Common myeloid progenitor, CD34-positive (primary cell): ENCODE measurements at regions of chr16 and their contacts with region 1.

Region 1: GRCh38 chr16:56970934-56971767 is 9.4 kb downstream of the CETP start:
- DNase-seq: peak in 1 of 3 donors; percentile 36
- H3K4me3 ChIP-seq: no peak overlapping the region
- H3K27ac ChIP-seq: no peak overlapping the region
- H3K4me1 ChIP-seq: peaks cover 5 to 14% (median 7%) of the 10 kb centered on the region in 4 experiments
- H3K27me3 ChIP-seq: no peaks in the 10 kb centered on the region

Region 2: GRCh38 chr16:56988948-56989945 is 18.1 kb after region 1 on chr16 and contains the start of gene NLRC5:
- CTCF ChIA-PET with region 1: interaction called, 19 read pairs
- POLR2A ChIA-PET with region 1: interaction called, 3 read pairs
- DNase-seq: peak; percentile 83 to 94 (median 92)
- H3K4me3 ChIP-seq: peak within 1 kb of the TSS; percentile 58 to 95 (median 83)
- H3K27ac ChIP-seq: peak within 1 kb of the TSS; percentile 66 to 68
- H3K4me1 ChIP-seq: peaks cover 5 to 30% (median 26%) of the 10 kb centered on the region in 4 experiments
- H3K27me3 ChIP-seq: no peaks in the 10 kb centered on the region

Region 3: DNA sequence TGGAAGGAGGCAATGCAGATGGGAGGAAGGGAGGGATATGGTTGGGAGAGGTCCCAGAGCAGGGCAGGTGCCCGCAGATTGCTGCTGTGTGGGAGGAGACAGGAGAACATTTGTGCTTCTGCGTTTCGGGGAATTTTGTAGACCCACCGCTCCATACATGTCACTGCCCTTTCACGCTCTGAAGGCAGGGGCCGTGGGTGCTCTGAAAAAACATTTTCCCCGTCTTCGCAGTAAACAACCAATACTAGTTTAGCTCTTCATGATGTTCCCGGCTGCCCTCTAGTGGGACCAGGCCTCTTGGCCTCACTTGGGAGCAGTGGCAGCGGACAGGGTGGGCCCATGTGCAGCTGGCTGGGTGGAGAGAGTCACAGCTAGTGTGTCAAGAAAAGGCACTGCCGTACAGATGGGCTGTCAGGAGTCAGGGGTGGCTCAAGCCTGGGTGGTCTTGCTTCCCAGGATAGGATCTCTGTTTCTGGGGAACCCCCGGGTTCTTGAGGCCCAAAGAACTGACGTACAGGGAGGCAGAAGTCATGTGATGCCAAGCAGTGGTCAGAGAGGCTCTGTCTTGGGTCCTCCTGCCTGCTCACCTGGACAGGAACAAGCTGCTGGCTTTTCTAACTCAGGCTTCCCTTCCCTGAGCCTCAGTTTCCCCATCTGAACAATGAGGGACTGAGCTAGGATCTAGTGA is 74.7 kb after region 1 on chr16:
- CTCF ChIA-PET with region 1: interaction called, 61 read pairs
- POLR2A ChIA-PET with region 1: no interaction called
- DNase-seq: peak; percentile 59 to 81 (median 76)
- H3K4me3 ChIP-seq: peak overlapping the region in 1 of 7 experiments; percentile 8
- H3K27ac ChIP-seq: no peak overlapping the region
- H3K4me1 ChIP-seq: peaks cover 2 to 33% (median 21%) of the 10 kb centered on the region in 4 experiments
- H3K27me3 ChIP-seq: no peaks in the 10 kb centered on the region